Psoas muscle (tissue), 8 donors: ENCODE measurements at regions of chr1 and their contacts with region 1.

Region 1: GRCh38 chr1:229287267-229287666 is 16.4 kb downstream of the RAB4A start:
- DNase-seq: no peak
- ATAC-seq: no peak
- H3K4me3 ChIP-seq: no peak overlapping the region
- H3K27ac ChIP-seq: no peak overlapping the region
- H3K4me1 ChIP-seq: peaks cover 9% of the 10 kb centered on the region
- H3K27me3 ChIP-seq: no peaks in the 10 kb centered on the region
- CTCF ChIP-seq: no peak

Region 2: DNA sequence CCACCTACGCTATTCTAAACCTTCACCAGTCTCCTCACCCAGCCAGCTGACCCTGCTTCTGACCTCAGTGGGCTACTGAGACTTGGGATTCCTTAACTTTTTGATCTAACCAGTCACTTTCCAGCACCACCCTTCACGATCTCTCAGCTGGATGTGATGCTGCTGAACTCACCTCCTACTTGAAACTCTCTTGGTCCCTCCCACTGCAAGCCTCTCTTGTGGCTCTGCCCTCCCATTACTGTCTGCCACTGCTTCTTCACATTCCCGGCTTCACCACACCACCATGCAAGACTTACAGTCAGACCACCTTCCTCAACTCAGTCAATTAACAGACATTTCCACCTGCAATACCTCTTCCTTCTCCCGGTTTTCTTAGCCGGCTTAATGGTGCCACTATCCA is 332.3 kb after region 1 on chr1:
- intact Hi-C with region 1: loop called in 1 of 2 experiments (anchors 5 kb)
- DNase-seq: no peak
- ATAC-seq: no peak
- H3K4me3 ChIP-seq: no peak overlapping the region
- H3K27ac ChIP-seq: no peak overlapping the region
- H3K4me1 ChIP-seq: peaks cover 53% of the 10 kb centered on the region
- H3K27me3 ChIP-seq: no peaks in the 10 kb centered on the region
- CTCF ChIP-seq: no peak